ENCODE measurements at regions of chr11 and their contacts with region 1.

Region 1: DNA sequence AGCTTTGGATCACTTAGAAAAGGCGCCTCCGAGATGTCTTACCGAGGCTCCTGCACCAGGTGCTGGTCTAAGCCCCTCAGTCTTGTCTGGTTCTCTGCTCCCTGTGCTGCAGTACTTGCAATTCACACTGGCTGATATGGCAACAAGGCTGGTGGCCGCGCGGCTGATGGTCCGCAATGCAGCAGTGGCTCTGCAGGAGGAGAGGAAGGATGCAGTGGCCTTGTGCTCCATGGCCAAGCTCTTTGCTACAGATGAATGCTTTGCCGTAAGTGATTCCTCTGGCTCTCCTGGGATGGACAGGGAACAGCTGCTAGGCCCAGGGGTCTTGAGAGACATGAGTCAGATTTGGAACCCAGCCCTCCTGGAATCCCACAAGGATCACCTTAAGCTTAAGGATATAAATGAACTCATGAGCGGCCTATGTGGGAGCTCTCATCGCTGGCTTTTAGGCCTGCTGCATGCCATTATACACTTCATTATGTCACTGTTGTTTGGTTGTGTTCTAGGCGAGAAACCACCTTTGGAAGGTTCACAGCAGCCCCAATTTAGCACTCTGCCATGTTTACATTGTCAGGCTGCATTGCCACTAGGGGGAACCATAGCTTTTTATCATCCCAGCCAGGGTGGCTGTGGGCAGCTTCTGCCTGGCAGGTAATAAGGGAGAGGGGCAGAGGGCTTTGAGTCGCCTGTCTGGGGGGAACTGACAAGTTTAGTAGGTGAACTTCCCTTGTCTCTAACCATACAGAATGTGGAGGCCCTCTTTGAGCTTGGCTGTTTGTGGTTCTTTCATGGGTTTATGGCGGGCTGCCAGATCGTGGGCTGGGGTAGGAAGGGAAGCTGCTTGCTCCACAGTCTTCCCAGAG is 8.5 kb downstream of the ACAD8 start:
- DNase-seq: no peak
- H3K4me3 ChIP-seq: no peak overlapping the region
- H3K27ac ChIP-seq: no peak overlapping the region
- H3K4me1 ChIP-seq: peaks cover 7% of the 10 kb centered on the region
- H3K27me3 ChIP-seq: no peaks in the 10 kb centered on the region
- CTCF ChIP-seq: peak; percentile 65 to 72

Region 2: GRCh38 chr11:134331354-134332188 is 69.7 kb after region 1 on chr11 and contains the start of gene GLB1L2:
- CTCF ChIA-PET with region 1: no interaction called
- dilution Hi-C with region 1: no loop called
- in situ Hi-C with region 1: no loop called
- intact Hi-C with region 1: loop called (anchors 5 kb)
- DNase-seq: peak; percentile 20
- H3K4me3 ChIP-seq: peak within 1 kb of the TSS; percentile 52 to 60 (median 58)
- H3K27ac ChIP-seq: no peak within 1 kb of the TSS
- H3K4me1 ChIP-seq: peaks cover 13% of the 10 kb centered on the region
- H3K27me3 ChIP-seq: no peaks in the 10 kb centered on the region
- CTCF ChIP-seq: no peak
- total RNA-seq, gene GLB1L2: 1.0 to 4.1 TPM

Region 3: DNA sequence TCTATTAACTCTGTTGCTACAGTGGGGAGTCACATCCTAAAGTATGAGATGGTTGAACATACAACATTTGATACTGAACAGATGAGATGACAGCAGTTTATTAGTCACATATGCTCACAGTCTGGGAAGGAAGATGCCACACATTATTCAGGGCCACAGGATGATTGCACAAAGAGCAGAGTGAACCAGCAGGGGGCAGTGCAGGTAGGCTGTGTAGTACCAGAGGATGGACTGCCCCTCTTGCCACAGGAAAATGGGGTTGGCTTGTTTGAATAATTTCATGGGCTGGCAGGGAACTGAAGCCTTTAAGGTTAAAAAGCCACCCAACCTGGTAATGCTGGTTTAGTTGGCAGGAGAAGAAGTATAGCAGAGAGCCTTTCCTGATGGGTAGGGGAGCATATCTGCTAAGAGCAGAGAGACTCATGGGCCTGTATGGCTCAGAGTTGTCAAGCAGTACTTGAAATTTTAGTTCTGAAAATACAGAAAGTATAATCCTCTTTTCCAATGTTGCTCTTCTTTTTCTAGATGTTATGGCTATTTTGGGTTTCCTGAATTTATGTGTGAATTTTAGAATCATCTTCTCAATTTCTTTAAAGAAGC is 330.6 kb after region 1 on chr11:
- CTCF ChIA-PET with region 1: no interaction called
- dilution Hi-C with region 1: no loop called
- in situ Hi-C with region 1: no loop called
- intact Hi-C with region 1: loop called (anchors 10 kb)
- DNase-seq: no peak
- H3K4me3 ChIP-seq: no peak overlapping the region
- H3K27ac ChIP-seq: no peak overlapping the region
- H3K4me1 ChIP-seq: no peaks in the 10 kb centered on the region
- H3K27me3 ChIP-seq: no peaks in the 10 kb centered on the region
- CTCF ChIP-seq: peak in 1 of 2 donors; percentile 1

Measured in mammary epithelial cell (primary cell).